Dorsolateral prefrontal cortex (tissue), 120 donors: ENCODE measurements at regions of chr1 and their contacts with region 1.

Region 1: DNA sequence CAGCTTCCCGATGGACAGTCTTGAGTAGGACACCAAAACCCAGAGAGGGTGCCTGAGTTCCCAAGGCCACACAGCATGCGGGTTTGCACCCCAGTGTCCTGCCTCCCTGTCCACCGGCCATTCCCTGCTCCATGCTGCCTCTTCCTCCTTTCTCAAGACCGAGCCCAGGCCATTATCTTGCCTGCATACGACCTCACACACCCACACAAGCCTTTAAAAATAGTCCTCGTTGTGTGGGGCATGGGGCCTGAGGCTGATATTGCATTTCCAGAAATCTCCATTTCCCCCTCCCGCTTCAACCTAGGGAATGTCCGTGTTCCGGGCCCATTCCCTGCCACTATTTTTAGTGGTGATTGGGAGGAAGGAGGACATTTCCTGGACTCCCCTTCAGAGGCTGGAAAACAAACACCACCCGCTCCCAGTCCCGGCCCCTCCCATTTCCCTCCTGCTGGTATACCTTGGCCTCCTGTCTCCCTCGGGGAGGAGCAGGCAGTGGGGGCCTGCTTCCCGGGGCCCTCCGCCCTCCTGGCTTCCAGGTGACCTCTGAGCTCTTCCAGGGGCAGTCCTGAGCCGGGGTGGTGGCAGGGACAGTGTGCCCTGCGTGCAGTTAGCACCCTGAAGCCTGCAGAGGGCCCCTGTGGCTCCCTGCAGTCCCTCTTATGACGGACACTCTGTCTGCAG is 132.3 kb upstream of the TMEM51 start:
- DNase-seq: no peak
- H3K4me3 ChIP-seq: no peak overlapping the region
- H3K27ac ChIP-seq: peak overlapping the region in 15 of 59 donors; percentile 2 to 73 (median 35)
- H3K27me3 ChIP-seq: no peaks in the 10 kb centered on the region
- CTCF ChIP-seq: no peak

Region 2: DNA sequence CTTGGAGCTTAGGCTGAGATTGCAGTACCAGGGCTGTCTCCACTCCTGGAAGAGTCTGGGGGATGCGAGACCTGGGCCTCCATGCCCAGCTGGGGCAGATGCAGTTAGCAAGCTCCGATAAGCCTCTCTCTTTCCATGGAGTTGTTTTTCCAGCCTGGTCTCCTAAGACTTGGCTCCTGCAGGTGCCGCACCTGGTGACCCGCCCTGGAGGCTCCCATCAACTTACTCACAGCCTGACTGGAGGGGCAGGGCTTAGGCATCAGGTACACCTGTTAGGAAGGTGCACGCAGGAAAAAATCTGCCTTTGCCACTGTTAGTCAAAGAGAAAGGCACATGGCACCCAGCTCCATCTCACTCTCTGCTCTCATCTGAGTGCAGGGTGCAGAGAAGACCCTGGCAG is 65.8 kb before region 1 on chr1:
- intact Hi-C with region 1: no loop called
- DNase-seq: no peak
- H3K4me3 ChIP-seq: no peak overlapping the region
- H3K27ac ChIP-seq: no peak overlapping the region
- H3K27me3 ChIP-seq: no peaks in the 10 kb centered on the region
- CTCF ChIP-seq: no peak

Region 3: GRCh38 chr1:14970115-14970798 is 50.9 kb before region 1 on chr1:
- intact Hi-C with region 1: no loop called
- DNase-seq: peak in 6 of 10 donors; percentile 27 to 68 (median 63)
- H3K4me3 ChIP-seq: no peak overlapping the region
- H3K27ac ChIP-seq: peak overlapping the region in 21 of 59 donors; percentile 8 to 75 (median 31)
- H3K27me3 ChIP-seq: no peaks in the 10 kb centered on the region
- CTCF ChIP-seq: no peak

Region 4: GRCh38 chr1:14987829-14988603 is 33.2 kb before region 1 on chr1:
- intact Hi-C with region 1: loop called in 1 of 2 experiments (anchors 5 kb)
- DNase-seq: no peak
- H3K4me3 ChIP-seq: peak overlapping the region in 1 of 59 donors; percentile 3
- H3K27ac ChIP-seq: peak overlapping the region in 25 of 59 donors; percentile 3 to 67 (median 29)
- H3K27me3 ChIP-seq: no peaks in the 10 kb centered on the region
- CTCF ChIP-seq: no peak